Gastrocnemius medialis (tissue), 4 donors: ENCODE measurements at regions of chr1 and their contacts with region 1.

Region 1: DNA sequence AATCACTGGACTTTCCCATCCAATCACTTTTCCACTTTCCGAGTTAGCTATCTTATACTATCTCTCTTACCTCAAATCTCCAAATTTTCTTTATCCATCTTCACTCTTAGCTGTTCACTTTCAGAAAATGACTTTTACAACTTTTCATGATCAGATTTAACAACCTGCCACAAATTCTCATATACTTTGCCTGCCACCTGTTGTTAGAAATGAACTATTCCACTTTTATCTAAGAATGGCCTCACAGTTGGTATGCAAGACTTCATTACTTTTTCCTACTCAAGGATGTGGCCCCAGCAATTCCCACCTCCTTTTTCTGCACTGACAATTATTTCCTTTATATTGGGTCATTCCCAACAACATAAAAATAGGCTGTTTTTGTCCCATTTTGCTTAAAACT is 93.6 kb upstream of the DEPDC1 start:
- DNase-seq: no peak
- ATAC-seq: no peak
- H3K4me3 ChIP-seq: no peak overlapping the region
- H3K27ac ChIP-seq: no peak overlapping the region
- H3K4me1 ChIP-seq: no peaks in the 10 kb centered on the region
- H3K27me3 ChIP-seq: no peaks in the 10 kb centered on the region
- CTCF ChIP-seq: no peak
- POLR2A ChIP-seq: no peak

Region 2: GRCh38 chr1:68459796-68460195 is 130.7 kb before region 1 on chr1:
- in situ Hi-C with region 1: loop called in 1 of 4 experiments (anchors 10 kb)
- intact Hi-C with region 1: no loop called
- DNase-seq: no peak
- ATAC-seq: no peak
- H3K4me3 ChIP-seq: no peak overlapping the region
- H3K27ac ChIP-seq: no peak overlapping the region
- H3K4me1 ChIP-seq: no peaks in the 10 kb centered on the region
- H3K27me3 ChIP-seq: no peaks in the 10 kb centered on the region
- CTCF ChIP-seq: no peak
- POLR2A ChIP-seq: no peak

Region 3: GRCh38 chr1:68542586-68542985 is 47.9 kb before region 1 on chr1:
- in situ Hi-C with region 1: no loop called
- intact Hi-C with region 1: no loop called
- DNase-seq: no peak
- ATAC-seq: no peak
- H3K4me3 ChIP-seq: no peak overlapping the region
- H3K27ac ChIP-seq: no peak overlapping the region
- H3K4me1 ChIP-seq: no peaks in the 10 kb centered on the region
- H3K27me3 ChIP-seq: no peaks in the 10 kb centered on the region
- CTCF ChIP-seq: no peak
- POLR2A ChIP-seq: no peak

Region 4: DNA sequence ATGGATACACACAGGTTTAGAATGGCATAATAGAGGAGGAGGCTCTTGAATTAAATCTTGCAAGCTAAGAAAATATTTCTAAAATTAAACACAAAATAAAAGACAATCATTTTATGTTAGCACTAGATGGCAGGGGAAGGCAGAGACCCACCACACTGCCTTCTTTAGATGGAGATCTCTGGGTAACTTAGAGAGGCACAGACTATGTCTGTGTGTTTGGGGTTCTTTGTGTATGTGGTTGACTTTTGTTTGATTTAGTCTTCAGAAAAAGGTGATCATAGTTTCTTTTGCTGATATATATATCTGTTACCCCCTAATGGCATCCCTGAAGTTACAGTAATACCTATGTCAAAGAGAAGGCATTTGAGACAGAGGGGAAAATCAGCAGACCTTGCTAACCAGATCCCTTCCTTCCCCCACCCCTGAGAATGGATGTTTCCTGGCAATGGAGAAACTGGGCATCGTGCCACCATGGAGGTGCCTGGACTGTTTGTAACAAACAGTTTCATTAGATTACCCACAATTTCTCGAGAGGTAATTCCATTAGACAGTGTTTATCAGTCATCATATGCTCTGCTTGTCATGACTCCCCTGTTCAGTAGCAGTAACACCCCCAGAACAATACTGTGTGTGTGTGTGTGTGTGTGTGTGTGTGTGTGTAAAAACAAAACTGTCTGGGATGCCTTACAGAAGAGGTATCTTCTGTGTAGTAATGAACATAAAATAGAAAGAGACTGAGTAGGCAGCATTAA is 134.7 kb after region 1 on chr1:
- in situ Hi-C with region 1: no loop called
- intact Hi-C with region 1: no loop called
- DNase-seq: no peak
- ATAC-seq: no peak
- H3K4me3 ChIP-seq: no peak overlapping the region
- H3K27ac ChIP-seq: no peak overlapping the region
- H3K4me1 ChIP-seq: no peaks in the 10 kb centered on the region
- H3K27me3 ChIP-seq: no peaks in the 10 kb centered on the region
- CTCF ChIP-seq: no peak
- POLR2A ChIP-seq: no peak

Region 5: GRCh38 chr1:68904477-68904876 is 314.0 kb after region 1 on chr1:
- in situ Hi-C with region 1: no loop called
- intact Hi-C with region 1: no loop called
- DNase-seq: no peak
- ATAC-seq: no peak
- H3K4me3 ChIP-seq: no peak overlapping the region
- H3K27ac ChIP-seq: no peak overlapping the region
- H3K4me1 ChIP-seq: no peaks in the 10 kb centered on the region
- H3K27me3 ChIP-seq: no peaks in the 10 kb centered on the region
- CTCF ChIP-seq: no peak
- POLR2A ChIP-seq: no peak